ENCODE measurements at regions of chr18 and their contacts with region 1.

Region 1: GRCh38 chr18:9913526-9914333 is at the start of gene VAPA:
- DNase-seq: peak; percentile 96
- ATAC-seq: peak; percentile 86
- H3K4me3 Mint-ChIP-seq: peak within 1 kb of the TSS; percentile 89
- H3K27ac Mint-ChIP-seq: peak within 1 kb of the TSS; percentile 93
- H3K4me1 Mint-ChIP-seq: peaks cover 20% of the 10 kb centered on the region
- H3K27me3 Mint-ChIP-seq: peaks cover 5% of the 10 kb centered on the region
- total RNA-seq, gene VAPA: 156 to 220 TPM

Region 2: DNA sequence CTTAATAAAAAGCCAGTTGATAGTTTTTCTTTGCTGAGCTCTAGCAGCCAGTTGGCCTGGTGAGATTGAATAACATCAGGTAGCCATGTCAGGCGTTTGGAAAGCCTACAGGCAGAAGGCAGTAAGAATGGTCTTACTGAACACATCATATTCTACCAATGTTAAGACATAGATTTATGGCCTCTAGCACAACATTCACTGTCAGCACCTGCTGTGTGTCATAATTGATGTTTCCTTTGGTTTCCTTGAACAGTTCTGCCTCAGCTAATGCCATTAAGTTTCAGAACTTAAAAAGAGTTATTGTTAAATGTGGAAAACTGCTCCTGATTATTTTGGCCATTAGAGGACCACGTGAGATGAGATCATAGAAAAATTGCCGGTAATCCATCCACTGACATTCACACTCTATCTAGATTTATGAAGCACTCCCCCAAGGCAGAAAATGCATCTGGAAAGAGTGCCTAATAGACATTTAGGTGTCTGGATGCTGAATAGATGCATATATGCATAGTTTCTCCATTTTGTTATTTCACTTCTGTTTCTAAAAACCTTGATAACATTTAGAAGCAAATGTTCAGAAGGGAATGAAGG is 1911.9 kb before region 1 on chr18:
- CTCF ChIA-PET with region 1: no interaction called
- POLR2A ChIA-PET with region 1: no interaction called
- intact Hi-C with region 1: no loop called
- DNase-seq: no peak
- ATAC-seq: no peak
- H3K4me3 Mint-ChIP-seq: no peak overlapping the region
- H3K27ac Mint-ChIP-seq: no peak overlapping the region
- H3K4me1 Mint-ChIP-seq: no peaks in the 10 kb centered on the region
- H3K27me3 Mint-ChIP-seq: no peaks in the 10 kb centered on the region

Region 3: GRCh38 chr18:8608795-8609658 is 1304.7 kb before region 1 on chr18 and contains the start of gene RAB12:
- CTCF ChIA-PET with region 1: interaction called, 3 read pairs
- POLR2A ChIA-PET with region 1: no interaction called
- intact Hi-C with region 1: loop called in 1 of 2 experiments (anchors 2 kb)
- DNase-seq: peak; percentile 92
- ATAC-seq: peak; percentile 88
- H3K4me3 Mint-ChIP-seq: peak within 1 kb of the TSS; percentile 90
- H3K27ac Mint-ChIP-seq: peak within 1 kb of the TSS; percentile 91
- H3K4me1 Mint-ChIP-seq: peaks cover 47% of the 10 kb centered on the region
- H3K27me3 Mint-ChIP-seq: no peaks in the 10 kb centered on the region
- total RNA-seq, gene RAB12: 12.4 to 12.8 TPM

Region 4: GRCh38 chr18:9334329-9334972 is 579.3 kb before region 1 on chr18 and contains the start of gene TWSG1:
- CTCF ChIA-PET with region 1: no interaction called
- POLR2A ChIA-PET with region 1: interaction called, 4 read pairs
- intact Hi-C with region 1: loop called in 1 of 2 experiments (anchors 1 kb)
- DNase-seq: peak; percentile 95
- ATAC-seq: peak; percentile 86
- H3K4me3 Mint-ChIP-seq: peak within 1 kb of the TSS; percentile 82
- H3K27ac Mint-ChIP-seq: peak within 1 kb of the TSS; percentile 67
- H3K4me1 Mint-ChIP-seq: peaks cover 22% of the 10 kb centered on the region
- H3K27me3 Mint-ChIP-seq: peaks cover 3% of the 10 kb centered on the region
- total RNA-seq, gene TWSG1: 7.9 to 8.8 TPM

Region 5: GRCh38 chr18:9708057-9708433 is 205.7 kb before region 1 on chr18 and contains the start of gene RAB31:
- CTCF ChIA-PET with region 1: no interaction called
- POLR2A ChIA-PET with region 1: no interaction called
- intact Hi-C with region 1: loop called in 1 of 2 experiments (anchors 5 kb)
- DNase-seq: peak; percentile 47
- ATAC-seq: peak; percentile 34
- H3K4me3 Mint-ChIP-seq: peak within 1 kb of the TSS; percentile 76
- H3K27ac Mint-ChIP-seq: no peak within 1 kb of the TSS
- H3K4me1 Mint-ChIP-seq: peaks cover 42% of the 10 kb centered on the region
- H3K27me3 Mint-ChIP-seq: peaks cover 71% of the 10 kb centered on the region
- total RNA-seq, gene RAB31: 0.48 to 1.8 TPM

Region 6: DNA sequence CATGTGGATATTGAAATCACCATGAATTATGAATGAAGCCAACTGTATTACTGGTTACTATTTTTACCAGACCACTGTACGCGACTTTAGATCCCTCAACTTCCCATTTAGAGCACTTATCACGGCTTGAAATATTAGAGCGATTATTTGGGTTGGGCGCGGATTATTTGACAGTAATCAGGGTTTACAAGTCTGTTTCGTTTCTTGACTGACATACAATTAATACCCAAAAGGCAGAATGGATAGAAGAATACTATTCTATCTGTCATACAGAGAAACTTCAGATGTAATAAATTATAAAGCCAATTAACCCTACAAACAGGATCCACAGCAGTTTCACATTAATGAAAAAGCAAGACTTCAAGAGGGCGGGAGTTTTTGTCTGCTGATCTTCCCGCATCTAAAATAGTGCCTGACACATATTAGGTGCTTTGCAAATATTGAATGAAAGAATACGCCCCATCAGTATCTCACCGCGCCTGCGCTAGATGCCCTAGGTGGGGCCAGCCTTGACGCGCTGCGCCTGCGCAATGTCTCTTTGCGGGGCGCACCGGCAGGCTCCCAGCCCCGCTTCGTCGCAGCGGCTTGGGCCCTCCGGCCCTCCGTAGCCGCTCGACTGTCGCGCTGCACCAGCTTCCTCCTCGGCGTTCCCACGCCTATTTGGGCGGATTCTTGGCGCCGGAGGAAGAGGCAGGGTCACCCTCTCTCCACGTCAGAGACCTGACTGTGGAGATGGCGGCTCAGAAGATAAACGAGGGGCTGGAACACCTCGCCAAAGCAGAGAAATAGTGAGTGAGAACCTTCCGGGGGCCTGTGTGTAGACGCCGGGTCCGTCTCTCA is 611.9 kb after region 1 on chr18 and contains the start of gene NAPG:
- CTCF ChIA-PET with region 1: no interaction called
- POLR2A ChIA-PET with region 1: no interaction called
- intact Hi-C with region 1: loop called (anchors 1 to 2 kb)
- DNase-seq: peak; percentile 94
- ATAC-seq: peak; percentile 84
- H3K4me3 Mint-ChIP-seq: peak within 1 kb of the TSS; percentile 92
- H3K27ac Mint-ChIP-seq: peak within 1 kb of the TSS; percentile 96
- H3K4me1 Mint-ChIP-seq: peaks cover 49% of the 10 kb centered on the region
- H3K27me3 Mint-ChIP-seq: peaks cover 4% of the 10 kb centered on the region
- total RNA-seq, gene NAPG: 28.6 to 31.0 TPM

Region 7: GRCh38 chr18:11908182-11909060 is 1994.7 kb after region 1 on chr18 and contains the start of gene MPPE1:
- CTCF ChIA-PET with region 1: no interaction called
- POLR2A ChIA-PET with region 1: no interaction called
- intact Hi-C with region 1: loop called in 1 of 2 experiments (anchors 5 kb)
- DNase-seq: peak; percentile 93
- ATAC-seq: peak; percentile 93
- H3K4me3 Mint-ChIP-seq: peak within 1 kb of the TSS; percentile 88
- H3K27ac Mint-ChIP-seq: peak within 1 kb of the TSS; percentile 94
- H3K4me1 Mint-ChIP-seq: peaks cover 18% of the 10 kb centered on the region
- H3K27me3 Mint-ChIP-seq: no peaks in the 10 kb centered on the region
- total RNA-seq, gene MPPE1: 22.4 to 29.6 TPM

Measured in activated CD4-positive, alpha-beta T cell treated with anti-CD3 and anti-CD28 coated beads for 36 hours (primary cell).